A549 (cell line): ENCODE measurements at regions of chr16 and their contacts with region 1.

Region 1: DNA sequence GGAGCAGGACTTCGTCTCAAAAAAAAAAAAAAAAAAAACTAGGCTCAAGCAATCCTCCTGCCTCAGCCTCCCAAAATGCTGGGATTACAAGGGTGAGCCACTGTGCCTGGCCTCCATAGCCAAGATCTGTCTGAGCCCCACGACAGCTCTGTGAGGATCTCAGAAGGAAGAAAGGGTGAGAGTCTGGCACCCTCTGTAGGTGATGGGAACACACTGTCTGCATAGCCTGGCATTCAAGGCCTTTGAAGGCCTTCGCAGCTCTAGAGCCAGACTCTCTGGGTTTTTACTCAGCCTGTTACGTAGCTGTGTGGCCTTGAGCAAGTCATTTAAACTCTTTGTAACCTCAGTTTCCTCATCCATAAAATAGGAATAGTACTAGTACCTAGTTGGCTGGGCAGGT is 6.3 kb upstream of the XPO6 start:
- DNase-seq: peak in 1 of 2 experiments; percentile 49
- ATAC-seq: peak; percentile 85 to 89
- H3K4me3 ChIP-seq: no peak overlapping the region
- H3K27ac ChIP-seq: no peak overlapping the region
- H3K4me1 ChIP-seq: no peaks in the 10 kb centered on the region
- CTCF ChIP-seq: peak; percentile 20; the same call in 1 of the 3 replicates
- EP300 ChIP-seq: no peak
- POLR2A ChIP-seq: no peak
- RAD21 ChIP-seq: peak; percentile 33 to 65; a peak in 2 of 5 replicates

Region 2: GRCh38 chr16:28082624-28083023 is 135.5 kb before region 1 on chr16:
- CTCF ChIA-PET with region 1: no interaction called
- POLR2A ChIA-PET with region 1: interaction called, 11 read pairs
- DNase-seq: no peak
- ATAC-seq: no peak
- H3K4me3 ChIP-seq: no peak overlapping the region
- H3K27ac ChIP-seq: no peak overlapping the region
- H3K4me1 ChIP-seq: no peaks in the 10 kb centered on the region
- CTCF ChIP-seq: no peak
- EP300 ChIP-seq: no peak
- POLR2A ChIP-seq: no peak
- RAD21 ChIP-seq: no peak

Region 3: GRCh38 chr16:28118636-28119035 is 99.5 kb before region 1 on chr16:
- CTCF ChIA-PET with region 1: no interaction called
- POLR2A ChIA-PET with region 1: no interaction called
- DNase-seq: no peak
- ATAC-seq: no peak
- H3K4me3 ChIP-seq: no peak overlapping the region
- H3K27ac ChIP-seq: no peak overlapping the region
- H3K4me1 ChIP-seq: no peaks in the 10 kb centered on the region
- CTCF ChIP-seq: no peak
- EP300 ChIP-seq: no peak
- POLR2A ChIP-seq: no peak
- RAD21 ChIP-seq: no peak